PC-9 (cell line): ENCODE measurements at regions of chr4 and their contacts with region 1.

Region 1: DNA sequence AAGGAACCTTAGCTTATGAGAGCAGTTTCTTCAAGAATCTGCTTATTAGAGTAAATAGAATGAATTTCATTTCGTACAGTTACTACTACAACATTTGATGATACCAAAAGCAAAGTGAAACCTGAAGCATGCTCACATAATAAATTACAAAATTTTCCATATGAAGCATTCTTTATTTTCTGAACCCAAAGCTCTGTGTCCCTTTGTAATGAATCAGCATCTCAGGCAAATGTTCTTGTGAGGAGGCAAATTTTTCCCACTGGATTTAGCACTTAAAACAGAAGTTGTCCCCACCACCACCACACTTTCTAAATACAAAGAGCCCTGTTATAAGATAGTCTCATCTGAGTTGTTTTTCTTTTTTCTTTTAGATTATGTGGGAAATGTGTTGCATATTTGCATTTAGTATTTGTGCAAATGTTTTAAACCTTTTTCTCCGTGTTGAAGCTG is 70.7 kb upstream of the NFKB1 start:
- DNase-seq: no peak
- H3K4me3 ChIP-seq: peak overlapping the region; percentile 81
- H3K27ac ChIP-seq: peak overlapping the region; percentile 85
- H3K4me1 ChIP-seq: peaks cover 21% of the 10 kb centered on the region
- H3K27me3 ChIP-seq: no peaks in the 10 kb centered on the region
- CTCF ChIP-seq: no peak

Region 2: GRCh38 chr4:101066624-101067170 is 1363.8 kb before region 1 on chr4:
- CTCF ChIA-PET with region 1: no interaction called
- POLR2A ChIA-PET with region 1: no interaction called
- intact Hi-C with region 1: no loop called
- DNase-seq: no peak
- H3K4me3 ChIP-seq: no peak overlapping the region
- H3K27ac ChIP-seq: no peak overlapping the region
- H3K4me1 ChIP-seq: no peaks in the 10 kb centered on the region
- H3K27me3 ChIP-seq: no peaks in the 10 kb centered on the region
- CTCF ChIP-seq: no peak

Region 3: GRCh38 chr4:101238706-101239105 is 1191.8 kb before region 1 on chr4:
- CTCF ChIA-PET with region 1: interaction called, 11 read pairs
- POLR2A ChIA-PET with region 1: no interaction called
- intact Hi-C with region 1: no loop called
- DNase-seq: no peak
- H3K4me3 ChIP-seq: no peak overlapping the region
- H3K27ac ChIP-seq: 0 out of 2 replicates have a peak overlapping the region, but pooled peaks have one; percentile 19
- H3K4me1 ChIP-seq: peaks cover 9% of the 10 kb centered on the region; the same call in 1 of the 2 replicates
- H3K27me3 ChIP-seq: no peaks in the 10 kb centered on the region
- CTCF ChIP-seq: no peak

Region 4: GRCh38 chr4:102299354-102300107 is 131.0 kb before region 1 on chr4:
- CTCF ChIA-PET with region 1: interaction called, 11 read pairs
- POLR2A ChIA-PET with region 1: no interaction called
- intact Hi-C with region 1: no loop called
- DNase-seq: peak in 1 of 2 experiments; percentile 14
- H3K4me3 ChIP-seq: no peak overlapping the region
- H3K27ac ChIP-seq: no peak overlapping the region
- H3K4me1 ChIP-seq: no peaks in the 10 kb centered on the region
- H3K27me3 ChIP-seq: no peaks in the 10 kb centered on the region
- CTCF ChIP-seq: peak; percentile 75

Region 5: DNA sequence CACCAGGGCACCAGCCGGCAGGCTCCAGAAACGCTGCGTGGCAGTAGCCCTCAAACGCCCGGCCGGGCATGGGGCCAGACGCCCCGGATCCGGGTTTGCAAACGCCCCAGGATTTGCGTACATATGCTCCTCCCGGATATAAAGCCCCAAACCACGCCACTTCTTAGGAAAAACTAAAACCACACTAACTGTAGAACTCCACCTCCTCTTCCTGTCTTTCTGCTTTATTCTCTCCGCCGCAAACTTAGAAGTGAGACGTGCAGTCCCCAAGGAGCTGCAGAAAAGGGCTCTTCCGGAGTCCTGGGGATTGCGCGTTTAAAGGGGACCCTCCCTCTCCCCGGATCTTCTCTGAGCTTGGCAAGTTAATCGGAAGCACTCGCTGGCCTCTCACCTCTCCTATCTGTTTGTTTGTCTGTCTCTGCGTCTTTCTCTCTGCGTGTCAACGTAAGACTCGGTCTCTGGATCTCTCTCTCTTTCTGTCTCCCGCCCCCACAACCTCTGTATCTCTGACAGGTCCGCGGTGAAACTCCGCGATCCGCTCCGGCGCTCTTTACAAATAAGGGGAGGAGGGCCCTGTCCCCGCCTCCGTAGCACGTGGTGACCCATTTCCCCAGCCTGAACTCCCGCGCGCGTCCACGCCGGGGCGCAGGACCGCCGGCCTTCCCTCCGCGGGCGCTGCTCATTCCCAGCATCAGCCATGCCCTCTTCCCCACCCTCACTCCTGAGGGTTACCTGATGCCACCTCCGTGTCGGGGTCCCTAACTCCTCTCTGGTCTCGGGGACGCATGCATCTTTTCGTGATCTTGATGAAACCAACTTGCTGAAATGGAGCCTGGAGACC is 85.3 kb before region 1 on chr4 and contains the start of gene SLC39A8:
- CTCF ChIA-PET with region 1: interaction called, 5 read pairs
- POLR2A ChIA-PET with region 1: no interaction called
- intact Hi-C with region 1: loop called (anchors 1 kb)
- DNase-seq: peak; percentile 72 to 82
- H3K4me3 ChIP-seq: peak within 1 kb of the TSS; percentile 72
- H3K27ac ChIP-seq: no peak within 1 kb of the TSS
- H3K4me1 ChIP-seq: peaks cover 15% of the 10 kb centered on the region; the same call in 1 of the 2 replicates
- H3K27me3 ChIP-seq: no peaks in the 10 kb centered on the region
- CTCF ChIP-seq: peak; percentile 72
- total RNA-seq, gene SLC39A8: 11.6 and 14.5 TPM in 2 replicates

Region 6: GRCh38 chr4:103008875-103009729 is 578.6 kb after region 1 on chr4:
- CTCF ChIA-PET with region 1: interaction called, 14 read pairs
- POLR2A ChIA-PET with region 1: no interaction called
- intact Hi-C with region 1: loop called (anchors 1 kb)
- DNase-seq: peak in 1 of 2 experiments; percentile 52
- H3K4me3 ChIP-seq: no peak overlapping the region
- H3K27ac ChIP-seq: no peak overlapping the region
- H3K4me1 ChIP-seq: peaks cover 10% of the 10 kb centered on the region
- H3K27me3 ChIP-seq: no peaks in the 10 kb centered on the region
- CTCF ChIP-seq: peak; percentile 64

Region 7: GRCh38 chr4:103091601-103092223 is 661.2 kb after region 1 on chr4:
- CTCF ChIA-PET with region 1: interaction called, 10 read pairs
- POLR2A ChIA-PET with region 1: no interaction called
- intact Hi-C with region 1: loop called (anchors 5 kb)
- DNase-seq: peak; percentile 17 to 57
- H3K4me3 ChIP-seq: no peak overlapping the region
- H3K27ac ChIP-seq: no peak overlapping the region
- H3K4me1 ChIP-seq: no peaks in the 10 kb centered on the region
- H3K27me3 ChIP-seq: no peaks in the 10 kb centered on the region
- CTCF ChIP-seq: peak; percentile 72

Region 8: GRCh38 chr4:103948244-103949018 is 1517.9 kb after region 1 on chr4:
- CTCF ChIA-PET with region 1: interaction called, 10 read pairs
- POLR2A ChIA-PET with region 1: no interaction called
- intact Hi-C with region 1: no loop called
- DNase-seq: peak in 1 of 2 experiments; percentile 16
- H3K4me3 ChIP-seq: no peak overlapping the region
- H3K27ac ChIP-seq: no peak overlapping the region
- H3K4me1 ChIP-seq: no peaks in the 10 kb centered on the region
- H3K27me3 ChIP-seq: no peaks in the 10 kb centered on the region
- CTCF ChIP-seq: no peak